Posterior vena cava (tissue), 2 donors: ENCODE measurements at regions of chr7 and their contacts with region 1.

Region 1: GRCh38 chr7:32191305-32191704 is 121.1 kb upstream of the PDE1C start:
- DNase-seq: no peak

Region 2: DNA sequence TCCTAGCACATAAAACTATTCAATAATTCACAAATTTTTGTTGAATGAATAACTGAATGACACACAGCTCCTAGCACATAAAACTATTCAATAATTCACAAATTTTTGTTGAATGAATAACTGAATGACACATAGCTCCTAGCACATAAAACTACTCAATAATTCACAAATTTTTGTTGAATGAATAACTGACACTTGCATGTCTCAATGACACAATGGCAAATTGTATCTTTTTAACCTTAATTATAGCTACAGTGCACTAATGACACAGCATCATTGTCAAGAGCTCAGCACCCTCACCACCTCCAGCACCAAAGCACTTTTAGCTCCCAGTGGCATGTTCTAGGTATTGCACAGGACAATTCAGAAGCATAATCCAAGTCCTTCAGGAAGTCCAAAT is 252.7 kb before region 1 on chr7:
- intact Hi-C with region 1: loop called in 1 of 2 experiments (anchors 5 kb)
- DNase-seq: no peak

Region 3: DNA sequence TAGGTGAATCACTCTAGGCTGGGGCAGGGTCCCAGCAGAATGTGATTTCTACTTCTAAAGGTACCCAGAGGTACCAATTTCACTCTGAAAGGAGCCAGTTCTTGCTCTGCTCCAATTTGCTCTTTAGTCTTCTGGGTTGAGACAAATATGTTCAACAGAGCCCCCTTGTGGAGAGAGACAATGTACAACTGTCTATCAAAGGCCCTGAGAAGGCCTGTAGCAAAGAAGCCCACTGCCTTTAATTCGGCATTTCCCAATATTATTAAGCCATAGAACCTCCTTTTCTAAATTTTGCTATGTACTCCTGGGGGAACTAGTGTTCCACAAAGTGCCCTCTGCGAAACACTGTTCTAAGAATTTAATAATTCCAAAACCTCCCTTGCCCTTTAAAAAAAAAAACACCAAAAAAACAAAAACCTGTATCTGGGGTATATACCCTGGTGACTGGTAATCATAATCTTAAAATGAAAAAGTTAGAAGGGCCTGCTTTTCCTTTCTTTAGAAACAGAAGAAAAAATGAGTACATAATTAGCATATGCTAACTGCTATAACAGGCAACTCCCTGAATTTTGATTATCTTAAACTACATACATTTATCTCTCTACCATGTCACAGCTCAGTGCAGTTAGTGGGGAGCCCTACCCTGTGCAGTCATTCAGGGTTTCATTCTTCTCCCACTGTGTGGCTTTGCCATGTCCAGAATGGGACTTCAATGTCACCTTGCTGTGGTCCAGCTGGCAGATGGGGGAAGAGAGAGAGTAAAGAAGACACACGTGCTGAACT is 1553.2 kb after region 1 on chr7:
- intact Hi-C with region 1: no loop called
- DNase-seq: no peak